T-cell (primary cell): ENCODE measurements at regions of chr9 and their contacts with region 1.

Region 1: GRCh38 chr9:130002320-130003046 is 40.5 kb downstream of the FNBP1 start:
- DNase-seq: no peak
- ATAC-seq: no peak
- H3K4me3 ChIP-seq: no peak overlapping the region
- H3K4me3 Mint-ChIP-seq: peak overlapping the region in 1 of 3 donors; percentile 31
- H3K27ac ChIP-seq: peak overlapping the region; percentile 19
- H3K27ac Mint-ChIP-seq: peak overlapping the region; percentile 45 to 70
- H3K4me1 ChIP-seq: peaks cover 6 to 75% of the 10 kb centered on the region in 2 experiments
- H3K4me1 Mint-ChIP-seq: peaks cover 73 to 81% (median 81%) of the 10 kb centered on the region in 3 donors
- H3K27me3 ChIP-seq: no peaks in the 10 kb centered on the region
- H3K27me3 Mint-ChIP-seq: no peaks in the 10 kb centered on the region

Region 2: DNA sequence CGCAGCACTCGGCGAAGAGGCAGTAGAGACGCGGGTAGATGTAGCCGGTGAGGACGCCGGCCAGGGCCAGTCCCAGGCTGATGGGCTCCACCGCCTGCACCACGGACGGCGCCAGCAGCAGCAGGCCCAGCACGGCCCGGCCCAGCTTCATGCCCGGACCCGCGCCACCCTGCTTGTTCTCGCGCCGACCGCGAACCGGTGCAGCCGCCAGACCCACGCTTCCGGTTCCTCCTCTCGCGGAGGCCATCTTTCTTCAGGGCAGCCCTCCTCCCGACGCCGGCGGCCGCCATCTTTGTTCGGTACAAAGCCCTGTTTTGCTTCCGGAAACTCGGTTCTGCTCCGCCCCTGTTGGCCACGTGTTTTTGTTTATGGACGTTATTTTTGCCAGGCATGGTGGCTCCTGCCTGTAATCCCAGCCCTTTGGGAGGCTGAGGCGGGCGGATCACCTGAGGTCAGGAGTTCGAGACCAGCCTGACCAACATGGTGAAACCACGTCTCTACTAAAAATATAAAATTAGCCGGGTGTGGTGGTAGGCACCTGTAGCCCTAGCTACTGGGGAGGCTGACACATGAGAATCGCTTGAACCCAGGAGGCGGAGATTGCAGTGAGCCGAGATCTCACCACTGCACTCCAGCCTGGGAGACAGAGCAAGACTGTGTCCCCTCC is 178.4 kb before region 1 on chr9 and contains the start of gene TOR1A:
- CTCF ChIA-PET with region 1: no interaction called
- POLR2A ChIA-PET with region 1: no interaction called
- DNase-seq: peak; percentile 82 to 95 (median 90)
- ATAC-seq: peak; percentile 93 to 95 (median 94)
- H3K4me3 ChIP-seq: peak within 1 kb of the TSS; percentile 63 to 76
- H3K4me3 Mint-ChIP-seq: peak within 1 kb of the TSS; percentile 80 to 86 (median 85)
- H3K27ac ChIP-seq: peak within 1 kb of the TSS; percentile 23
- H3K27ac Mint-ChIP-seq: peak within 1 kb of the TSS; percentile 79 to 86
- H3K4me1 ChIP-seq: peaks cover 4 to 18% of the 10 kb centered on the region in 2 experiments
- H3K4me1 Mint-ChIP-seq: peaks cover 11 to 15% (median 11%) of the 10 kb centered on the region in 3 donors
- H3K27me3 ChIP-seq: no peaks in the 10 kb centered on the region
- H3K27me3 Mint-ChIP-seq: no peaks in the 10 kb centered on the region
- total RNA-seq, gene TOR1A: 16.6 to 39.3 (median 34.1) TPM

Region 3: GRCh38 chr9:129988607-129989361 is 13.7 kb before region 1 on chr9:
- CTCF ChIA-PET with region 1: no interaction called
- POLR2A ChIA-PET with region 1: interaction called in 1 of 2 experiments, 13 read pairs
- DNase-seq: peak in 12 of 35 experiments; percentile 8 to 68 (median 26)
- ATAC-seq: peak; percentile 54 to 68 (median 64)
- H3K4me3 ChIP-seq: no peak overlapping the region
- H3K4me3 Mint-ChIP-seq: peak overlapping the region; percentile 10 to 55 (median 28)
- H3K27ac ChIP-seq: peak overlapping the region; percentile 79
- H3K27ac Mint-ChIP-seq: peak overlapping the region; percentile 89
- H3K4me1 ChIP-seq: peaks cover 24 to 61% of the 10 kb centered on the region in 2 experiments
- H3K4me1 Mint-ChIP-seq: peaks cover 67 to 80% (median 79%) of the 10 kb centered on the region in 3 donors
- H3K27me3 ChIP-seq: no peaks in the 10 kb centered on the region
- H3K27me3 Mint-ChIP-seq: no peaks in the 10 kb centered on the region

Region 4: DNA sequence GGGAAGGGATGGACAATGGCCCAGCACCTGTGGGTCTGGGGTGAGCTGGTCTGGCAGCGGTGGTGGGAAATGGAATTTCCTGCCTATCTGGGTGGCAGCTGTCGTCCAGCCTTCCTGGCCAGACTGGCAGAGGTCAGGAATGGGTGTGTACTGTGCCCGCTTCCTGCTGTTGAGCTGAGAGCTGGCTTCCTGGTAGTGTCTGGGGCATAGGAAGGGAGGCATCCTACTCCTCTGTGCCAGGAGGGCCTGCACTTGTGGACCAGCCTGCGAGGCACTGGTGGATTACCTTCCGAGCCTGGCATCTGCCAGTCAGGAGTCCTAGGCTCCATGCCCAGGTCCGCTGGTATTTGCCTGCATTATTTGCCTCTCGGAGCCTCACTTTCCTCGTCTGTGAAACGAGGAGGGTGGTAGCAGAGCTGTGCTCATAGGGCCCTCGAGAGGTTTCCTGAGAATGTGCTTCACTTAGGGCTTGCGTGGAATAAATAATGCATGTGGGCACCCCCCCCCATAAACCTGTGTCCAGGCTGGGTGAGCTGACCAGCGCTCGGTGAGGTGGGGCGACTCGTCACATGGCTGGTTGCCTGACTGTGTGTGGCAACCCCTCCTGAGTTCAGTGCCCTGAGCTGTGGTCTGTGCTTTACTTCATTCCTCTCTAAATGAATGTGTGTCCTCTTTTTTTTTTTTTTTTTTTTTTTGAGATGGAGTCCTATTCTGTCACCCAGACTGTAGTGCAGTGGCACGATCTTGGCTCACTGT is 310.8 kb after region 1 on chr9:
- CTCF ChIA-PET with region 1: no interaction called
- POLR2A ChIA-PET with region 1: no interaction called
- DNase-seq: no peak
- ATAC-seq: no peak
- H3K4me3 ChIP-seq: no peak overlapping the region
- H3K4me3 Mint-ChIP-seq: no peak overlapping the region
- H3K27ac ChIP-seq: no peak overlapping the region
- H3K27ac Mint-ChIP-seq: no peak overlapping the region
- H3K4me1 ChIP-seq: no peaks in the 10 kb centered on the region
- H3K4me1 Mint-ChIP-seq: peaks cover 0 to 5% (median 0%) of the 10 kb centered on the region in 3 donors
- H3K27me3 ChIP-seq: peaks cover under 1 to 26% of the 10 kb centered on the region in 2 experiments
- H3K27me3 Mint-ChIP-seq: peaks cover 17 to 27% of the 10 kb centered on the region in 2 donors